Gastrocnemius medialis (tissue), 4 donors: ENCODE measurements at regions of chr12 and their contacts with region 1.

Region 1: DNA sequence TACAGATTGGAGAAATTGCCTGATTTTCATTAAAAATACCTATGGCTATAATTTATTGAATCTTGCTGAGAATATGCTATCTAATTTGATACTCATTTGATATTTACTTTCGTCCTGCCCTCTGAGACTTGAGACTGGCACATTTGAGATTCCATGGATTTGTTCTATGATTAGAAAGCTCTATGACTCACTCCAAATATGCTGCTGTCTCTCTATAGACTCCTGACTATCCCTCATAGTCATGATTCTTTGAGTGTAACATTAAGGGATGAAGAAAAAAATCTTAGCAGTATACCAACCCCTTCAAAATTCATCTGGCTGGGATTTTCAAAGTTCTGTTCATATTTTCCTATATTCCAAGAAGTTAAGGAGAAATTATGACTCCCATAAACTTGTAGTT is 191.9 kb downstream of the LRIG3 start:
- DNase-seq: no peak
- ATAC-seq: peak; percentile 74 to 86
- H3K4me3 ChIP-seq: no peak overlapping the region
- H3K27ac ChIP-seq: no peak overlapping the region
- H3K4me1 ChIP-seq: no peaks in the 10 kb centered on the region
- H3K27me3 ChIP-seq: no peaks in the 10 kb centered on the region
- CTCF ChIP-seq: no peak
- POLR2A ChIP-seq: no peak

Region 2: DNA sequence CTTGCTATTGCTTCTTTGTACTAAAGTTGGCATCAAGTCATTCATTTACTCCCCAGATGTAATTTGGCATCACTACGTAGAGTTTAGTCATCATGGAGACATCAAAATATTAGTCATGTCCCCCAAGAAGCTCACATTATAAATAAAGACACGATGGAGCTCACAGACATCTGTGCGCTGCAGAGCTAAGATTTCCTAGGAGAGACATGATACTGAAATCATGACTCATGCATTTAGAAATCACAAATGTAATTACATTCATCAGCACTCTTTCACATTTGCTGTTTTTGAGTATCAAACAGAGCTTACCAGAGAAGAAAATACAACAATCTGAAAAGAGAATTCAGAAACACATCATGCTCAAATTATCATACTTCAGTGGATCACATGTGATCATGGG is 22.1 kb after region 1 on chr12:
- in situ Hi-C with region 1: no loop called
- intact Hi-C with region 1: loop called (anchors 1 kb)
- DNase-seq: peak in 1 of 2 donors; percentile 11
- ATAC-seq: peak; percentile 14 to 30
- H3K4me3 ChIP-seq: no peak overlapping the region
- H3K27ac ChIP-seq: no peak overlapping the region
- H3K4me1 ChIP-seq: peaks cover 4 to 6% of the 10 kb centered on the region in 2 donors
- H3K27me3 ChIP-seq: no peaks in the 10 kb centered on the region
- CTCF ChIP-seq: no peak
- POLR2A ChIP-seq: no peak

Region 3: DNA sequence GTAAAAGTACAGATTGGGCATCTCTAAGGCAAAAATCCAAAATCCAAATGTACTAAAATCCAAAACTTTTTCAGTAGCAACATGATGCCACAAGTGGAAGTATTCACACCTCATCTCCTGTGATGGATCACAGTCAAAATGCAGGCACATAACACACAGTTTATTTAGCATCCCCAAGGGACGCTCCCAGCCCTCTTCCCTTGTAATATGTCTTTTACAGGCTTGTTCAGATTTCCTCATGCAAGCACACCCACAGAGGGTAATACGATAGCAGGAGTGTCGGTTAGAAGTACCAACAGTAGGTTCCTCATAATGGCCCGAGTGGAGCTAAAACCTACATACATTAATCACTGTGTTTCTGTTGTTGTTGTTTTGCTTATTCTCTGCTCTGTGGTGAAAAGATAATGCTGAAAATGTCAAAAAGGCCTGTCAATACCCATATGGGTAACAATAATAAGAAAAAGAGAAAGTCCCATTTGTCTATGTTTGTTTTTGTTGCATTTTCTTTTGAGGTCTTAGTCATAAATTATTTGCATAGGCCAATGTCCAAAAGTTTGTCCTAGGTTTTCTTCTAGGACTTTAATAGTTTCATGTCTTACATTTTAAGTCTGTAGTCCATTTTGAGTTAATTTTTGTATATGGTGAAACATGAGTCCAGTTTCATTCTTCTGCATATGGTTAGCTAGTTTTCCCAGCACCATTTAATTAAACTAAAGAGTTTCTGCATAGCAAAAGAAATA is 58.8 kb after region 1 on chr12:
- in situ Hi-C with region 1: no loop called
- intact Hi-C with region 1: no loop called
- DNase-seq: no peak
- ATAC-seq: no peak
- H3K4me3 ChIP-seq: no peak overlapping the region
- H3K27ac ChIP-seq: no peak overlapping the region
- H3K4me1 ChIP-seq: no peaks in the 10 kb centered on the region
- H3K27me3 ChIP-seq: no peaks in the 10 kb centered on the region
- CTCF ChIP-seq: no peak
- POLR2A ChIP-seq: no peak

Region 4: GRCh38 chr12:59372956-59373355 is 644.6 kb after region 1 on chr12:
- in situ Hi-C with region 1: no loop called
- intact Hi-C with region 1: no loop called
- DNase-seq: no peak
- ATAC-seq: no peak
- H3K4me3 ChIP-seq: no peak overlapping the region
- H3K27ac ChIP-seq: no peak overlapping the region
- H3K4me1 ChIP-seq: no peaks in the 10 kb centered on the region
- H3K27me3 ChIP-seq: no peaks in the 10 kb centered on the region
- CTCF ChIP-seq: no peak
- POLR2A ChIP-seq: no peak